ENCODE measurements at regions of chr1 and their contacts with region 1.

Region 1: GRCh38 chr1:43614891-43615290 is 35.1 kb upstream of the KDM4A start:
- DNase-seq: no peak
- H3K4me3 ChIP-seq: no peak overlapping the region
- H3K27ac ChIP-seq: no peak overlapping the region
- H3K4me1 ChIP-seq: no peaks in the 10 kb centered on the region
- H3K27me3 ChIP-seq: no peaks in the 10 kb centered on the region
- CTCF ChIP-seq: no peak
- POLR2A ChIP-seq: no peak

Region 2: DNA sequence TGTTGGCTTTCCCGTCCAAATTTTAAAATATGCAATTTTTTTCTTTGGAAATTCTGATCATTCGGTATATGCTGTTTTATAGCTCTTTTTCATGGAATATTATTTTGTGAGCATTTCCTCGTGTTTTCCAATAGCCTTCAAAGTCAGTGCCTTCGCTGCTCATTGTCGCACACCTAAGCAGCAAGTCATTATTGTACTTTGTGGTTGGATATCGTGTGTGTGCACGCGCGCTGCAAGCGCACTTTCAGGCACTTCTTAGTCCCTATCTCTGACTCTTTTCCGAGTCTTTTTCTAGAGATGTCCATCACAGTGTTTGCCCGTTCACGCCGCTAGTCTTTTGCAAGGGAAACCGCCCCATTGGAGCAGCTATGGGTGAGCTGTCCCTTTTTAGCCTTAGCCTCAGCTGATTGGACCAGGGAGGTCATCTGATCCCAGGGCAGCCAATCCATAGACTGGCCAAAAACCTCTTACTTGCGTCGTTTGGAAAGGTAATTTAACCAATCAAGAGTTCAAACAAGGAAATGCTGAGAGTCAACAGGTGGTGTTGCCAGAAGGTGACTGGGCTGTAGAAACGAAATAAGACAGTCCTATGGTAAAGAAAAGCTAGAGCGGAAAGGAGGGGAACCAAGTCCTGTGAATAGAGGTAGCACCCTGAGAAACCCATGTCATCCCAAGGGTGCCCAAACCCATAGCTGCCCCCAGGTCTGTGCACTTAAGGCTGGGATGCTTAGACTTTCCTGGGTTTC is 160.5 kb before region 1 on chr1:
- CTCF ChIA-PET with region 1: no interaction called
- POLR2A ChIA-PET with region 1: no interaction called
- dilution Hi-C with region 1: no loop called
- intact Hi-C with region 1: no loop called
- DNase-seq: peak; percentile 86
- H3K4me3 ChIP-seq: peak overlapping the region; percentile 19 to 72 (median 67)
- H3K27ac ChIP-seq: peak overlapping the region; percentile 55
- H3K4me1 ChIP-seq: peaks cover 43% of the 10 kb centered on the region
- H3K27me3 ChIP-seq: no peaks in the 10 kb centered on the region
- CTCF ChIP-seq: no peak
- POLR2A ChIP-seq: peak; percentile 88

Region 3: GRCh38 chr1:43572084-43572483 is 42.8 kb before region 1 on chr1:
- CTCF ChIA-PET with region 1: no interaction called
- POLR2A ChIA-PET with region 1: interaction called, 10 read pairs
- dilution Hi-C with region 1: no loop called
- intact Hi-C with region 1: no loop called
- DNase-seq: no peak
- H3K4me3 ChIP-seq: no peak overlapping the region
- H3K27ac ChIP-seq: no peak overlapping the region
- H3K4me1 ChIP-seq: no peaks in the 10 kb centered on the region
- H3K27me3 ChIP-seq: no peaks in the 10 kb centered on the region
- CTCF ChIP-seq: no peak
- POLR2A ChIP-seq: no peak

Measured in endothelial cell of umbilical vein (primary cell).